ENCODE measurements at regions of chr15 and their contacts with region 1.

Region 1: DNA sequence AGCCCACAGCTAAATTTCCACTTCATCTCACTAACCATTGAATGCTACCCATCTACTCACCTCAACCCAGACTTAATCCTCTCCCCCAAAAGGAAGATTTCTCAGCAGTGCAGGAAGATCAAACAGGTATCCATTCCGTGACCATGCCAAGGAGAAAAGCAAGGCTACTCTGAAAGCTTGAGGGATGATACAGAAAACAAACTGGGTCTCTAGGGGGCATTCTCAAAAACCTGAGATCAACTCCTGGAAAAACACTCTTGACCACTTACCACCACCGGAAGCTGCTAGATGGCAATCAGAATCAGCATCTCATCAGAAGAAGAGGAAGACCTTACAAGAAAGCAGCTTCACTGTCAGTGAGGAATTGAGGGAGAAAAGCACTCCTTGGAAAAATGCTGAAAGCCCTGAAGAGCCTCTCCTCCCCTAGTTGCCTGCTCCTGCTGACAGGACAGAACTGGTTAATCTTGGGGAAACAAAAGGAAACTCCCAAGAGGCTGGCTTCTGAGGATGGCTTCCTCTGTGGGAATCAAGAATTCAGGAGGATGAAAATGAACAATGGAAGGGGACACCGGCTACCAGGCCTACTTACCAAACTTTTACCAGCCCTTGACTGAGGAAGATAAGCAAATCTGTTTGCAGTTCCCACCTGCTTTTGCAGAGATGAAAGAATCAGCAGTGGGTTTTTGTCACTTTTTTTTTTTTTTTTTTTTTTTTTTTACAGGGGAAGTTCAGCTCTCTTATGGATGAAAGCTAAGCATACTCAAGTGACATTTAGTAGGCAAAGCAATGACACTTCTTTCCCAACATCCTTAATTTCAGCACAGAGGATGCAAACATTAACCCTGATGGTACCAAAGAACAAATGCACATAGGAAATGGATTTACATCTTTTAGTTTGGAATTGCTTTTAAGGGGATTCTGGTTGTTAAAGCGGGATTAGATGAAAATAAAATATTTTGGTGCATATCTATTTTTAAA is at the start of gene ATP8B4:
- H3K4me3 ChIP-seq: no peak within 1 kb of the TSS
- H3K27ac ChIP-seq: no peak within 1 kb of the TSS
- H3K4me1 ChIP-seq: no peaks in the 10 kb centered on the region
- CTCF ChIP-seq: no peak

Region 2: DNA sequence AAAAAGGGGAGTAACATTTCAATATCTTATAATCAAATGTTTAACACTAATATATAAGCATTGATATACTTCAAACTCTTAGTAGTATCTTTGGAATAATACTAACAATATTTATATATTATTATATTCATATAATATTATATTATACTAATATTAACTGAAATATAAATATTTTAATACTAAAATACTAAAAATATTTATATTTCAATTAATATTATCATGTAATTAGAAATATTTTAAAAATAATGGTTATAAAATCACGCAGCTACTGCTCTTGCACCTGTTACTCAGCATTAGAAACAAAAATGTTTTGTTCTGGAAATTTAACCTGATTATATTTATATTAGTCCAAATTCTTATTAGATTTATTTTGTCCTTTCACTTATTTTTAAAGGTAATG is 12.3 kb after region 1 on chr15:
- CTCF ChIA-PET with region 1: interaction called, 4 read pairs
- POLR2A ChIA-PET with region 1: interaction called, 10 read pairs
- H3K4me3 ChIP-seq: no peak overlapping the region
- H3K27ac ChIP-seq: no peak overlapping the region
- H3K4me1 ChIP-seq: no peaks in the 10 kb centered on the region
- CTCF ChIP-seq: no peak

Measured in HEK293 (cell line).